ENCODE measurements at regions of chr7 and their contacts with region 1.

Region 1: DNA sequence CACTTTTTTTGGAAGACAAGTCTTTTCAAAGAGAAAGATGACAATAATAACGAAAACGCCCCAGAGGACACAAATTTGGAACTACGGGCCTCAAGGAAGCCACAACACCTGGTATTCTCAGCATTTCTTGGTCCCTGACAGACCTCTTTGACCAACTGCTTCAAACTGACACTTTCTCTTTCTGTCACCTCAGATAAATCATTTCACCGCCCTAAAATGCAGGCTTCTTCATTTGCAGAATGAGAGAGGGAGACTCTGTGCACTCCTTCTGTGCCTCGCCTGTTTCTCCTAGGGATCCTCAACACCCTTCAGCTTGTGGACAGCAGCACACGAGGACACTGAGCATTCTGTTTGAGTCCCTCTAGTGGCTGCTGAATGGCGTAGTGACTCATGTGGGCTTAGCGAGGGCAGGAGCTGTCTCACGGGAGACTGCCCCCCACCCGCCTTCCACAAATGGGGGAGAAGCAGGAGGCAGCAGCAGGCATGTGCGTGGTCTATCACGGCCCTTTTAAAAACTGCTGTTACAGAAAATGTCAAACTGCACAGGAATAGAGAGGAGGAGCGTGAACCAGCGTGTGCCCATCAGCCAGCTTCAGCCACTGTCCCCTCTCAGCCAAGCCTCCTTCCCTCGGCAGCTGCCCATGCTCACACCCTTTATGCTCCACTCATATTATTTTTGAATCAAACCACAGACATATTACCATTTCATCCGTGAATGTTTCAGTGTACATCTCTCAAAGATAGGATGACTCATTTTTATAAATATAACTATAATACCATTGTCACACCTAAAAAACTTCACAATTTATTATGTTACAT is 41.4 kb downstream of the GSDME start:
- DNase-seq: no peak
- ATAC-seq: peak; percentile 19

Region 2: GRCh38 chr7:24685708-24686107 is 30.2 kb before region 1 on chr7:
- intact Hi-C with region 1: loop called (anchors 2 kb)
- DNase-seq: no peak
- ATAC-seq: no peak

Region 3: GRCh38 chr7:25968205-25968993 is 1252.5 kb after region 1 on chr7:
- intact Hi-C with region 1: no loop called
- DNase-seq: no peak
- ATAC-seq: no peak

Measured in sciatic nerve (tissue), 2 donors.